Calu3 (cell line): ENCODE measurements at regions of chr10 and their contacts with region 1.

Region 1: DNA sequence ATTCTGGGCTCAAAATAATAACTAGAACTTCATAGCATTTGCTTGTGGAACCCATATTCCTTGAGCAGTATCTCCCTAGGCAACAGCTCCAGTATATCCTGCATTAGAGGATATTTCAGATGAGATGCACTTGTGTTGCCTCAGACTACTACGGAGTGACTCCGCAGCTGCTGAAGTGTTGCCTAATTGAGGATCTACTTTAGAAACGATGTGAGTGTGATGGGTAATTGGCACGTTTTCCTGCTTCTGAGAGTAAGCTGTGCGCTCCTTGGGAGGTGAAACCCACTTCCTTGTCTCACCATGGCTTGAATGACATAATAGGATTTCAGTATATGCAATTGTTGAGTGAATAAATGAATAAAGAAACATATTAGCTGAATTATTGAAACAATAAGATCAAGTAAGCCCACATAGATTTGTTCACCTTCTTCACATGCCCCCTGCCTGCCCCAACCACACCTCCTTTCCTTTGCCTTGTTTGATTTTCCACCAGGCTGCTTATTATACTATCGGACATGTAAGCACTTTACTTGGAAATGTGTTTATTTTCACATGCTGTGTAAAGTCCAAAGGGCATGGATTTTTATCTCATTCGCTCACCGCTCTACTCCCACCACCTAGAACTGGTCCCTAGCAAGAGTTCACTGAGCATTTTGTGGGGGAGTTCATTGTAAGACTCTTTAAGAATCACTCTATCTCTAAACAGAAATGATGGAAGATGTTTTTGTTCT is 303.8 kb downstream of the KCNMA1 start:
- DNase-seq: peak; percentile 6
- H3K4me3 Mint-ChIP-seq: no peak overlapping the region
- H3K27ac Mint-ChIP-seq: no peak overlapping the region
- H3K4me1 Mint-ChIP-seq: peaks cover 8% of the 10 kb centered on the region
- H3K27me3 Mint-ChIP-seq: peaks cover 12% of the 10 kb centered on the region
- CTCF ChIP-seq: no peak

Region 2: DNA sequence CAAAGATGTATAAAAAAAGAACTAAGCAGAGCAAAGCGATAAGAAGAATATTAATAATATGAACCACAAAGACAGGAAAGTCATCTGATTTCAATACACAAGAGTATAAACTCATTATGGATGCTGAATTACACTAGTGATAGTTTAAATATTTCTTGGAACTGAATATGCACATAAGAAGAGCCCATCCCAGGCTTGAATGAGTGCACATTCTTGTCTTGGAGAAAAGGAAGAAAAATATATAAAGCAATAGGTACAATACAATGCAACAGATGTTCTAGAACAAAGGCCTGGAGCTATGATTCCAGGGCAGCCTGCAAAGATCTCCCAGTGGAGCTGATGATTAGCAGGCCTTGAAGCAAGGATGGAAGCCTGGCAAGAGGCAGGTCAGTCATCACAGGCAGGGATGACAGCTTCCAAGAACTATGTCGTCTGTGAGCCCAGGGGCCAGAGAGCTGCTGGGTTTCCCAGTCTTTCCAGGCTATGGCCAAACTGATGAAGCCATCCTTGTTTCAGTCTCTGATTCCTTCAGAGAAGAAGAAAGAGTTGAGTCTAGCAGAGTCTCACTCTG is 26.3 kb after region 1 on chr10:
- CTCF ChIA-PET with region 1: no interaction called
- intact Hi-C with region 1: loop called (anchors 2 kb)
- DNase-seq: no peak
- H3K4me3 Mint-ChIP-seq: no peak overlapping the region
- H3K27ac Mint-ChIP-seq: no peak overlapping the region
- H3K4me1 Mint-ChIP-seq: no peaks in the 10 kb centered on the region
- H3K27me3 Mint-ChIP-seq: peaks cover 67% of the 10 kb centered on the region
- CTCF ChIP-seq: no peak

Region 3: GRCh38 chr10:77553971-77554365 is 220.2 kb after region 1 on chr10:
- CTCF ChIA-PET with region 1: no interaction called
- intact Hi-C with region 1: no loop called
- DNase-seq: no peak
- H3K4me3 Mint-ChIP-seq: no peak overlapping the region
- H3K27ac Mint-ChIP-seq: no peak overlapping the region
- H3K4me1 Mint-ChIP-seq: no peaks in the 10 kb centered on the region
- H3K27me3 Mint-ChIP-seq: peaks cover 43% of the 10 kb centered on the region
- CTCF ChIP-seq: no peak